Activated CD8-positive, alpha-beta T cell treated with anti-CD3 and anti-CD28 coated beads for 36 hours (primary cell): ENCODE measurements at regions of chr2 and their contacts with region 1.

Region 1: DNA sequence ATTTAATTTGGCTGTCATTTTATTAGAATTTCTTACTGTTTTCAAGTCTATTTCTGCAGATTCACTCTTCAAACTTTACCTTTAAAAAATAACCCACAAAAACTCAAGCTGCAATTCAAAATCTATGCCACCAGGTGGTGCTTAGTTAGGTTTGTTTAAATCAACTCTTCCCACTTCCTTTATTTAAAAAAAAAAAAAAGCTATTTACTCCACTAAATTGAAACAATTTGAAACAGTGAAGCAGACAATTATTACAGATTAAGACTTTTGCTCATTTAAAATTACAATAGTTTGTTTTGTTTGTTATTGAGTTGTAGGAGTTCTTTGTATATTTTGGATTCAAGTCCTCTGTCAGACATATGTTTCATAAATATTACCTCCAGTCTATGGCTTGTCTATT is 300.0 kb downstream of the PDE11A start:
- DNase-seq: peak; percentile 38
- ATAC-seq: no peak
- H3K4me3 Mint-ChIP-seq: no peak overlapping the region
- H3K27ac Mint-ChIP-seq: no peak overlapping the region
- H3K4me1 Mint-ChIP-seq: no peaks in the 10 kb centered on the region
- H3K27me3 Mint-ChIP-seq: peaks cover 1% of the 10 kb centered on the region
- CTCF ChIP-seq: peak; percentile 77

Region 2: DNA sequence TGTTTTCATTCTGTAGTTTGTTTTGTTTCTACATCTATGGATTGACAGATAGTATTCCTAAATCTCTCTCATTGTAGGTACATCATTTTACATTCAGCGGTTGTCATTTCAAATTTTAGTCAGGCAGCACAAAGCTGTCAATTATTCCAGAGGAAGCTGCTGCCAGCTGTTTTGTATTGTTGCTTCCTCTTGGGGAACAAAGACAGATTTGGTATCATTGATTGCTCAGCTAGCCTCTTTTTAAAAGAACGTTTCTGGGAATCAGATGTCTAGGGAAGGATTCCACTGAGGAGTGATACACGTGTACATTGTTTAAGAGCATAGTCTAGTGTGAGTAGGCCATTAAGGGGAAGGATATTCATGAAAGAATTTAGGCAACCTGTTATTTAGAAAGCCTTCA is 234.2 kb before region 1 on chr2:
- CTCF ChIA-PET with region 1: no interaction called
- POLR2A ChIA-PET with region 1: no interaction called
- intact Hi-C with region 1: no loop called
- DNase-seq: no peak
- ATAC-seq: no peak
- H3K4me3 Mint-ChIP-seq: no peak overlapping the region
- H3K27ac Mint-ChIP-seq: no peak overlapping the region
- H3K4me1 Mint-ChIP-seq: no peaks in the 10 kb centered on the region
- H3K27me3 Mint-ChIP-seq: no peaks in the 10 kb centered on the region
- CTCF ChIP-seq: no peak

Region 3: DNA sequence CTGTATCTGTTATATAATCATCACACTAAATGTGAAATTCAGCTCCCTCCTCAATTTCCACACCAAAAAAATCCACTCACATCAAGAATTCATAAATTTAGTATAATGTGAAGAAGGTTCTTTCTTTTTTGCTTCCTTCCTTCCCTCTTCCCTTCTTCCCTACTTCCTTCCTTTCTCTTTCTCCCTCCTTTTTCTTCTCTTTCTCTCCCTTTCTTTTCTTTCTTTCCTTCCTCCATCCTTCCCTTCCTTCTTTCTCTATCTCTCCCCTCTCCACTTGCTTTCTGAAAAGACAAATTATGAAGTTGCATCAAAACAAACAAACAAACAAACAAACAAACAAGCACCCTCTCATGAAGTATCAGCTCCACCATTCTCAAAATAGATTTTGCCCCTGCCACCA is 10.1 kb after region 1 on chr2:
- CTCF ChIA-PET with region 1: interaction called, 11 read pairs
- POLR2A ChIA-PET with region 1: no interaction called
- intact Hi-C with region 1: no loop called
- DNase-seq: no peak
- ATAC-seq: no peak
- H3K4me3 Mint-ChIP-seq: no peak overlapping the region
- H3K27ac Mint-ChIP-seq: no peak overlapping the region
- H3K4me1 Mint-ChIP-seq: peaks cover 43% of the 10 kb centered on the region
- H3K27me3 Mint-ChIP-seq: no peaks in the 10 kb centered on the region
- CTCF ChIP-seq: no peak

Region 4: DNA sequence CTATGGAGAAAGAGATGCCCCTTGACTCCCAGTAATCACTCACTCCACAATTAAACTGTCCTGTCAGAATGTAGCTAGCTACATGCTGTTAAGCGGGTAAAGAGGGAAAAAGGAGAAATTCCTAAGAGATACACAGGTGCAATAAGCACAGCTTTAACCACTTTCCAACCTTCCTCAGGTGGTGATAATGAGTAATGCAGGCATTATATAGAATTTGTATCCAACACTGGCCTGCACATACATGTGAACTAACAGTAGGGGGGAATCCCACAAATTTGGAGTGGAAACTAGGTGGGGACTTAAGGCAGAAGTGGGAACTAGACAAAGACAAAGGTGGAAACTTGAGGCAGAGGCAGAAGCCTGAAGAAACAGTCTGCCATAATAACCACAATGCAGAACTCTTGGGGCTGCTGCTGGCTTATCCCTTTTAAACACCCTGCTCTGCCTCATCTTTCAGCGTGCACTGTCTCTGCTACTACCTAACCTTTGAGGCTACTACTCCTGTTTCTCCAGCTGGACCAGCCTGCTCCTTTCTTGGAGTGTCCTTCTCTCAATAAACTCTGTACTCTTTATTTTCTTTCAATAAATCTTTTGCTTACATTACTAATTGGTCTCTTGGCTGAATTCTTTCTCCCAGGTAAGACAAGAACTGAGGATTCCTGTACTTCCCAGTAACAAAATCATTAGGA is 40.3 kb after region 1 on chr2:
- CTCF ChIA-PET with region 1: no interaction called
- POLR2A ChIA-PET with region 1: no interaction called
- intact Hi-C with region 1: no loop called
- DNase-seq: no peak
- ATAC-seq: no peak
- H3K4me3 Mint-ChIP-seq: no peak overlapping the region
- H3K27ac Mint-ChIP-seq: no peak overlapping the region
- H3K4me1 Mint-ChIP-seq: no peaks in the 10 kb centered on the region
- H3K27me3 Mint-ChIP-seq: peaks cover 4% of the 10 kb centered on the region
- CTCF ChIP-seq: no peak